HepG2 (cell line): ENCODE measurements at regions of chr10 and their contacts with region 1.

Region 1: DNA sequence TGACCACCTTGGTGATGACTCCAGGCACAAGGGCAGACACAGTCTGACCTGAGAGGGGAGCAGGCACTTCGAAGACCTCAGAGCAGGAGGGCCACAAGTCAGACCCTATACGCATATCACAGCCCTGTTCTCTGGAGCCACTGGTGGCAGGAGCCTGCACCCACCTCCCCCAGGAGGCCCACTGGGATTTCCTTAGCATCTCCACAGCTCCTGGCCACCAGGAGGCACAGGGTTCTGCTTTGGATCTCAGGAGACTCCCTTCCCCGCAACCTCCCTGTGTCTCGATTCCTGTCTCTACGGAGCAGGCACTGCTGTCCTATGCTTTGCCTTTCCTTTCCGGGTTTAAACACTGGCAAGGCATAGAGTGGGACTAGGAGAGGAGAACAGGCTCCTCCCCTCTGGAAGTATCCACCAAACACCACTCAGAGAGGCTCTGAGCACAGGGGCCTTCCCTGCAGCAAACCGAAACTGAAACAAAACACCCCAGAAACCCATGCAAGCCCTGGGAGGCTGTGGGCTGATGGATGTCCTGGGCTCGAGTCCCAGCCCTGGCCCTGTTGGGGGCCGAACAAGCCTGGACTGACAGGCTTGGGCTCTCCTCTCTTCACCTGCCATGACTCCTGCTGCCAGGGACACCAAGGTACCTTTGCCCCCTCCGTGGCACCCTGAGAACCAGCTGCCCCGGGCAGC is 166.3 kb downstream of the NEURL1 start:
- DNase-seq: peak; percentile 75
- ATAC-seq: peak; percentile 57
- H3K4me3 ChIP-seq: peak overlapping the region; percentile 56 to 72 (median 59); a peak in 5 of 6 replicates
- H3K27ac ChIP-seq: peak overlapping the region; percentile 82
- H3K4me1 ChIP-seq: peaks cover 79% of the 10 kb centered on the region
- H3K27me3 ChIP-seq: no peaks in the 10 kb centered on the region
- CTCF ChIP-seq: no peak
- EP300 ChIP-seq: no peak
- POLR2A ChIP-seq: peak in 1 of 2 experiments; percentile 48; a peak in 2 of 4 replicates
- RAD21 ChIP-seq: no peak; the same call in 1 of the 2 replicates

Region 2: DNA sequence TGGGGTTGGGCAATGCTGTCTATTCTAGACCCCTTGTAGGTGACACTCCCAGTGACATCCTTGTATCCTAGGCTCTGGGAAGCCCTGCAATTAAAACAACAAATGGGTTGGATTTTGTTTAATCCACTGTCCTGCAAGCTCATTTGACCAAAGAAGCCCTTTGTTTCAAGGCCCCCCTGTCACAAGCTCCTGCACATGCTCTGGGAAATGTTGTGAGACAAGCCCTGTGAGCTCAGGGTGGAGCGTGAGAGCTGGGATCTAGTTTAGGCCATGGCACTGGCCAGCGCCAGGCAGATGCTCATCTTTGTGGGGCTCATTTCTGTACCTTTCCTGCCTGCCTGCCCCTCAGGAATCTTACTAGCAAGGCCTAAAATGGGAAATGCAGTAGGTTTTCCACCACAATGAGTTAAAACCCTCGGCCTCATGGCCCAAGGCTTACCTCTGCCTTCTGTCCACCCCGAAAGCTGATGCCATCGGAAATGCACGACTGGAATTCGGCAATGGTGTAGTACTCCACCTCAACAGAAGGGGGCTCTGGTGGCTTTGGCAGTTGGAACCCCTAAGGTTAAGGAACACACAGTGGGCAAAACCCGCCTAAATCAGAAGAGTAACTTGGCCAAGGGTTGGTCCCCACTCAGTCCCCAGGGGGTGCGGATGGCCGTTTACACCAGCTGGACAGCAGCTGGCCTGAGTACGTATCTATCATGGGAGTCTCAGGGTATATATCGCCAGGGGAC is 54.3 kb before region 1 on chr10:
- CTCF ChIA-PET with region 1: no interaction called
- POLR2A ChIA-PET with region 1: interaction called, 3 read pairs
- in situ Hi-C with region 1: no loop called
- intact Hi-C with region 1: loop called (anchors 2 kb)
- DNase-seq: peak; percentile 33
- ATAC-seq: peak; percentile 39
- H3K4me3 ChIP-seq: no peak overlapping the region
- H3K27ac ChIP-seq: no peak overlapping the region
- H3K4me1 ChIP-seq: no peaks in the 10 kb centered on the region
- H3K27me3 ChIP-seq: no peaks in the 10 kb centered on the region
- CTCF ChIP-seq: peak; percentile 68
- EP300 ChIP-seq: no peak
- POLR2A ChIP-seq: no peak
- RAD21 ChIP-seq: no peak

Region 3: DNA sequence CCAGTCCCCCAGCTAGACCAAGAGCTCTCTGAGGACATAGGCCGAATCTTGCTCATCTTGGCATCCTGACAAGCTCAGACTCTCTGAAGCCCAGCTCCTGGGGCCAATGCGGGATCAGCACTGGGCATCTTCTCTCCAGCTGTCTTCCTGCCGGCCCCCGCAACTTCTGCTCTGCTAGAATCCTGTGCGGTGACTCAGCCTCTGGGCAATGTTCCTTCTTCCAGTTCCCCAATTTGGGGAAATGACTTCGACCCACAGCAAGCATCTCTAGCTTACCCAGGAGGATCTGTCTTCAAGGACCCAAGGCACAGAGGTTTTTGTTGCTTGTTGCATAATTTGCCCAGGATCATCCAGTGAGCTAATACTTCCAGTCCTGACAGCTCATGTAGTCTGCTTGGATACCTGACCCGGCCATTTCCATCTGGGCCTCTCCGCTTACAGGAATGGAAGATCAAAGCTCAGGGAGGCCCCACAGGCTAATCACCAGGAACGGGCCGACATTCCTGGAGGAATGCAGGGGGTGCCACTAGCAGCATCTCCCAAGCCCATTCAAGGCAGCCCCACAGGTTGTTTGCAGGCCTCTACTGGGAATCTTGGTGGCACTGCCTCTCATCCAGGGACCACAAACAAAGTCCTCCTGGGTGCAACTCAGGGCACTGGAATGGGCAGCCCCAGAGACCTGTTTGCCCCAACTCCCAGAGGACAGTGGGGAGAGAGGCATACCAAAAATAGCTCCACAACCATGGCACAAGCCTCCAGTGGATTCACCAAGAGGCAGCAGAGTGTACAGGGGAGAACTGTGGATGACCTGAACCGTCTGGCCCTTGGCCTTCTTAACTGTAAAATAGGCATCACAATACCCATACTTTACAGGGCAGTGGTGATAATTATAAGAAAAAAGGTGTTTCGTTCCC is 14.4 kb before region 1 on chr10:
- CTCF ChIA-PET with region 1: no interaction called
- POLR2A ChIA-PET with region 1: interaction called, 54 read pairs
- in situ Hi-C with region 1: no loop called
- intact Hi-C with region 1: loop called (anchors 2 kb)
- DNase-seq: peak; percentile 87
- ATAC-seq: peak; percentile 91
- H3K4me3 ChIP-seq: no peak overlapping the region
- H3K27ac ChIP-seq: peak overlapping the region; percentile 34
- H3K4me1 ChIP-seq: peaks cover 50% of the 10 kb centered on the region
- H3K27me3 ChIP-seq: no peaks in the 10 kb centered on the region
- CTCF ChIP-seq: no peak; the same call in 1 of the 2 replicates
- EP300 ChIP-seq: peak; percentile 31 to 63; a peak in 1 of 4 replicates
- POLR2A ChIP-seq: no peak; a peak in 1 of 4 replicates
- RAD21 ChIP-seq: no peak